Motor neuron (in vitro differentiated cells): ENCODE measurements at regions of chr12 and their contacts with region 1.

Region 1: GRCh38 chr12:68317047-68317667 is 15.0 kb downstream of the MDM1 start:
- ATAC-seq: no peak
- H3K4me3 ChIP-seq: no peak overlapping the region
- H3K27ac ChIP-seq: no peak overlapping the region
- H3K4me1 ChIP-seq: no peaks in the 10 kb centered on the region

Region 2: GRCh38 chr12:68040450-68041075 is 276.6 kb before region 1 on chr12:
- in situ Hi-C with region 1: loop called in 4 of 9 experiments (anchors 25 kb)
- ATAC-seq: peak; percentile 78 to 94 (median 86)
- H3K4me3 ChIP-seq: no peak overlapping the region
- H3K27ac ChIP-seq: no peak overlapping the region
- H3K4me1 ChIP-seq: no peaks in the 10 kb centered on the region

Region 3: DNA sequence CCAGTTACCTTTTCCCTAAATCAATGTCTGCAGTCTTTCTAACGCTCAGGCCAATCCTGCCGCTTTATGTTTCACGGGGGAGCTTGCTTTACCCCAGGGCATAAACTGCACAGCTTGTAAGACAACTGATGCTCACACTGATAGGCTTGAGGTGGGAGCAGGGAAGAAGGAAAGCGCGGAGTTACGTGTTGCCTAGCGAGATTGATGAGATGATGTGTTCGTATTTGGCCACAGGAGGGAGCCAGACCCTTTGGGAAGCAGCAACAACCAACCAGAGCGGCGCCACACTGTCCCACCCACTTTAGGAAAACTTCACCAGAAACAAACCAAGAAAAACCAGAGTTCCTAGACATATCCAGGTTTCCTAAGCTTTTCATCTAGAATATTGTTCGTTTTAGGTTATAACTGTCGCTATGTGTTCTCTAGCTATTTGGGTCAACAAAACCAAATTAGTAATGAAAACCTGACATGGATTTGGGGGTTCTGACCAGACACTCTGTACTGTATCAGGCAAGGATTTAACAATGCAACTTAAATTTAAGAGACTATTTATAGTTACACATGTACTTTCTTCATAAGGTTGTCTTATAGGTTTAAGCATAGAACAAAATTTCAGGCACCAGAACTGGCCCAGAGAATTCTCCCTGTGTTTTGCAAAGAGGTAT is 93.9 kb before region 1 on chr12:
- in situ Hi-C with region 1: loop called in 1 of 9 experiments (anchors 10 kb)
- ATAC-seq: peak; percentile 94 to 100 (median 98)
- H3K4me3 ChIP-seq: no peak overlapping the region
- H3K27ac ChIP-seq: no peak overlapping the region
- H3K4me1 ChIP-seq: no peaks in the 10 kb centered on the region